ENCODE measurements at regions of chr12 and their contacts with region 1.

Region 1: GRCh38 chr12:41151793-41152192 is 36.3 kb upstream of the PDZRN4 start:
- DNase-seq: peak; percentile 69
- H3K4me3 ChIP-seq: no peak overlapping the region
- H3K27ac ChIP-seq: no peak overlapping the region
- H3K4me1 ChIP-seq: no peaks in the 10 kb centered on the region
- H3K27me3 ChIP-seq: no peaks in the 10 kb centered on the region
- CTCF ChIP-seq: no peak

Region 2: GRCh38 chr12:41076114-41076513 is 75.7 kb before region 1 on chr12:
- CTCF ChIA-PET with region 1: no interaction called
- dilution Hi-C with region 1: loop called (anchors 5 kb)
- in situ Hi-C with region 1: no loop called
- intact Hi-C with region 1: no loop called
- DNase-seq: peak; percentile 50
- H3K4me3 ChIP-seq: no peak overlapping the region
- H3K27ac ChIP-seq: no peak overlapping the region
- H3K4me1 ChIP-seq: no peaks in the 10 kb centered on the region
- H3K27me3 ChIP-seq: no peaks in the 10 kb centered on the region
- CTCF ChIP-seq: no peak

Region 3: DNA sequence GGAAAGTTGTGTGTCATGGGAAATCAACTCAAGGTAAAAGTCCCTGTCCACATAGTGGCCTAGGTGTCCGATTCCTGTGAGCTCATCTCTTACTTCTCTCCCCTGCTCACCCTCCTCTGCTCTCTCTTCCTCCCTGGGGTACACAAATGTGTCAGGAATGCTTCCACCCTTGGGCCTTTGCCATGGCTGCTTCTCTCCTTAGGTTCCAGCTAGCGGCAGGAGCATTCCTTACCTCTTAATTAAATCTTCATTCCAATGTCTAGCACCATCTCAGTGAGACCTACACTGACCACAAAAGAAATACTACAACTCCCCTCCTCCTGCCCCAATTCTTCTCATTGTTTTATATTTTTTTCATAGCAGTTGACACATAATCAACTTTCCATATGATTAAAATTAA is 334.9 kb after region 1 on chr12:
- CTCF ChIA-PET with region 1: no interaction called
- dilution Hi-C with region 1: no loop called
- in situ Hi-C with region 1: no loop called
- intact Hi-C with region 1: no loop called
- DNase-seq: peak; percentile 14
- H3K4me3 ChIP-seq: no peak overlapping the region
- H3K27ac ChIP-seq: no peak overlapping the region
- H3K4me1 ChIP-seq: peaks cover 11% of the 10 kb centered on the region
- H3K27me3 ChIP-seq: no peaks in the 10 kb centered on the region
- CTCF ChIP-seq: no peak

Region 4: GRCh38 chr12:41585784-41586183 is 434.0 kb after region 1 on chr12:
- CTCF ChIA-PET with region 1: no interaction called
- dilution Hi-C with region 1: no loop called
- in situ Hi-C with region 1: no loop called
- intact Hi-C with region 1: no loop called
- DNase-seq: no peak
- H3K4me3 ChIP-seq: no peak overlapping the region
- H3K27ac ChIP-seq: no peak overlapping the region
- H3K4me1 ChIP-seq: no peaks in the 10 kb centered on the region
- H3K27me3 ChIP-seq: no peaks in the 10 kb centered on the region
- CTCF ChIP-seq: no peak

Measured in mammary epithelial cell (primary cell).